Dorsolateral prefrontal cortex (tissue), 120 donors: ENCODE measurements at regions of chr6 and their contacts with region 1.

Region 1: GRCh38 chr6:168895102-168895812 is 358.4 kb downstream of the THBS2 start:
- DNase-seq: peak; percentile 58 to 88 (median 81)
- H3K4me3 ChIP-seq: peak overlapping the region in 50 of 59 donors; percentile 3 to 55 (median 38)
- H3K27ac ChIP-seq: peak overlapping the region in 10 of 59 donors; percentile 3 to 59 (median 30)
- H3K27me3 ChIP-seq: no peaks in the 10 kb centered on the region
- CTCF ChIP-seq: peak; percentile 84 to 98 (median 94)

Region 2: GRCh38 chr6:168107212-168107983 is 787.9 kb before region 1 on chr6:
- intact Hi-C with region 1: no loop called
- DNase-seq: peak in 2 of 10 donors; percentile 12 to 26
- H3K4me3 ChIP-seq: no peak overlapping the region
- H3K27ac ChIP-seq: no peak overlapping the region
- H3K27me3 ChIP-seq: peaks cover 0 to 24% (median 3%) of the 10 kb centered on the region in 45 donors
- CTCF ChIP-seq: no peak

Region 3: DNA sequence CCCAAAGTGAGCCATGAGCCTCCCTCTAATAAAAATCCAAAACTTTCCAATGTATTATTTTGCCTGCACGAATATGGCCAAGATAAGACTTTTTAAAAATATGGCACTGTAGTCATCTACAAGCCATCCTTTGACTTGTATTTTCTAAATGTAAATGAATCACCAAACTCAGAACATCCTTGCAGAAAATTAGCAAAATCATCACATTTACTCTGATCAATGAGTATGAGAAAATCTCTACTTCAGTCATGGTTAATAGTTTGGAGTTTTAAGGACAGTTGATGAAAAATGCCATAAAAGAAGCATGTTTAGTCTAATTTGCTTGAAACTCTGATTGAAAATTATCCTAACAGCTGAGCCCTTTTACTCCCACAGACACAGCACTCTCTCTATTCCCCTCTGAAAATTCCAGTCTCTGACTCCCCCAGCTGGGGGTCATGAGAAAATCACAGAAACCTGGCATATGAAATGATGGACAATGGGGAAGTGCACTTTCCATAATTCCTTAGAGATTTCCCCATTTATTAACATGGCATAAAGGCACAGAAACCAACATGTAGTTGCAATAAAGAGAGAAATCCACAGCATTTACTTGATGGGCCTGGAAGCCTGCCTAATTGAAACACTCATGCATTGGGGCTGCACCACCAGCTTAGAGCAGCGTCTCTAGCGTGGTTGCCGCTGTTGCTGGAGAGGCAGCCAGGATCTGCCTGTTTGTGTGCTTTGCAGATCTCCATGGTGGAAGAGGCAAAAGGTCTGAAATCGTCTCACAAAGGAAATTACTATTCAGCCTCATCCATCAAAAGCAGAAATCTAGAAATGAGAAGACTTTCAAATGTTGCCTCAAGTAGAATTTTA is 592.6 kb after region 1 on chr6:
- intact Hi-C with region 1: loop called in 1 of 2 experiments (anchors 10 kb)
- DNase-seq: no peak
- H3K4me3 ChIP-seq: no peak overlapping the region
- H3K27ac ChIP-seq: no peak overlapping the region
- H3K27me3 ChIP-seq: no peaks in the 10 kb centered on the region
- CTCF ChIP-seq: peak in 51 of 56 donors; percentile 13 to 72 (median 45)